HAP-1 (cell line): ENCODE measurements at regions of chr12 and their contacts with region 1.

Region 1: GRCh38 chr12:76611533-76611932 is 52.0 kb upstream of the OSBPL8 start:
- DNase-seq: no peak
- H3K4me3 ChIP-seq: no peak overlapping the region
- H3K4me1 ChIP-seq: no peaks in the 10 kb centered on the region
- H3K27me3 ChIP-seq: no peaks in the 10 kb centered on the region; the same call in 1 of the 2 replicates

Region 2: GRCh38 chr12:76790564-76791552 is 179.3 kb after region 1 on chr12:
- in situ Hi-C with region 1: loop called (anchors 10 kb)
- DNase-seq: peak in 1 of 2 experiments; percentile 43
- H3K4me3 ChIP-seq: no peak overlapping the region
- H3K4me1 ChIP-seq: peaks cover 9% of the 10 kb centered on the region
- H3K27me3 ChIP-seq: no peaks in the 10 kb centered on the region

Region 3: DNA sequence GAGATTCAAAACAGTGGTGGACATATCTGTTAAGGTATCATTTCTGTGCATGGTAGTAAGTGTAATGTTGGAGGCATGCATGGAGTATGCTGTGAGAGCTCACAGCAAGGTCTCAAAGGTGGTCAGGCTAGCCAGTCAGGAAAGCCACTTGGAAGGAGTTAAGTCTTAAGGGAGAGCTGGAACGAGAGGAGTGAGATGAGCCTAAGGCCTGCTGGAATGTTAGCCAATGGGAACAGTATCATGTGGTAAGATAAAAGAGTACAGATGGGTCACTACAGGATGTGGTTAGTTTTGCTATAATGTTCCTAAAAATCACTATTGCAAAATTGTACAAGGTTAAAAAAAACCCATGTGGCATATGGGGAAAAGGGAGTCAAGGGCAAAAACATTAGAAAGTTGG is 765.6 kb after region 1 on chr12:
- in situ Hi-C with region 1: no loop called
- DNase-seq: no peak
- H3K4me3 ChIP-seq: no peak overlapping the region
- H3K4me1 ChIP-seq: no peaks in the 10 kb centered on the region
- H3K27me3 ChIP-seq: no peaks in the 10 kb centered on the region